HepG2 (cell line): ENCODE measurements at regions of chr17 and their contacts with region 1.

Region 1: DNA sequence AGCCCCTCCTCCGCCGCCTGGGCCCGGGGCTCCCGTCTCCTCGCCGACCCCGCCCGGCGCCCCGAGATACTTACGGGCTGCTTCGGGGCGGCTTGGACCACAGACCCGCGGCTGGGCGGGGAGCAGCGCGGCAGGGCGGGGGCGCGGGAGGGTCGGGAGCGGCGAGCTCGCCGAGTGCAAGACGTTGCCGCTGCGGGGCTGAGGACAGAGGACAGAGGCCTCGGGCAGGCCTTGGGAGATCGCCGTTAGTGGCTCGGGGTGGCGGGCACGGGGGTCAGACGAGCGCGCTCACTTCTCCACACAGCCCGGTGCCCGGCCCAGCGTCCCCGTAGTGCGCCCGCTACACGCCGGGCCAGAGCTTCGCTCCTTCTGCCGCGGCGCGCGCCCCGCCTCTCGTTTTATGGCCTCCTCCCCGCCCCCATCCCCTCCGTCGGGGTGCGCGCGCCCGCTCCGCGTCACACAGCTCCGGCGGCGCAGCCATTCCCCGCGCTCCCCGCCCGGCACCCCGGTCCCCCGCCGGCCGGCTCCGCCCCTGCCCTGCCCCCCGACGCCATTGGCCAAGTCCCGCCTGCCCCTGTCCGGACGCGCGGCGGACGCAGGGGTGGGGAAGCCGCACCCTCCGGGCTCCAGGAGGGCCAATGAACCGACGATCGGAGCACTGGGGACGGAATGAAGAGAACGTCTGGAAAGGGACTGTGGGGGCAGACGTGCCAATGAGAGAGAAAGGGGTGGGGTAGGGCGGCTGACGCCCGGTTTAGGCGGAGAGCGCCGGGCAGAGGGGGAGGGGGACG is at the start of gene TOB1:
- DNase-seq: peak; percentile 97
- ATAC-seq: peak; percentile 91
- H3K4me3 ChIP-seq: peak within 1 kb of the TSS; percentile 97 to 98 (median 97)
- H3K27ac ChIP-seq: peak within 1 kb of the TSS; percentile 95
- H3K4me1 ChIP-seq: peaks cover 41% of the 10 kb centered on the region
- H3K27me3 ChIP-seq: no peaks in the 10 kb centered on the region; a peak in 1 of 5 replicates
- CTCF ChIP-seq: 0 out of 2 replicates have a peak, but pooled peaks have one; percentile 18
- EP300 ChIP-seq: peak; percentile 56 to 63
- POLR2A ChIP-seq: peak; percentile 99 to 100
- RAD21 ChIP-seq: peak; percentile 87
- total RNA-seq, gene TOB1: 19.4 and 21.9 TPM in 2 replicates

Region 2: DNA sequence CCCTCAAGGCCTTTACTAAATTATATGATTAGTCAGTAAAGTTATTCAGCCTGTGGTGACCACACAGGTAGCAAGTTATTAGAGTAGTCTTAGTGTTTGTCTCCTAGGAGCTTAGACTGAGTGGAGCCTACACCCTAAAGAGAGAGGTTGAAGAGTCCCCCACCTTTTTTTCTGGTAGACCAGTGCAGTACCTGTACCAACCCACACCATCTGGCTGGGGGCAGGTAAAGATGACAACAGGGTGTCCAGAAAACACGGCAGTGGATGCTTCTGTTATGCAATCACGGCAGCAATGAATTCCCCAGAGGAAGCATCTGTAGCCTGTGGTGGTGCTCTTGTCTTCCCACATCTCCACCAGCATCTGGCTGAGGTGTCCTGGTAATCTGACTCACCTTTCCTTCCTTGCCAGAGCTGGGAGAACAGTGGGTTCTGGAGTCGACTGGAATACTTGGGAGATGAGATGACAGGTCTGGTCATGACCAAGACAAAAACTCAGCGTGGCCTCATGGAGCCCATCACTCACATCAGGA is 346.9 kb before region 1 on chr17:
- CTCF ChIA-PET with region 1: no interaction called
- POLR2A ChIA-PET with region 1: no interaction called
- in situ Hi-C with region 1: no loop called
- intact Hi-C with region 1: no loop called
- DNase-seq: no peak
- ATAC-seq: 0 out of 3 replicates have a peak, but pooled peaks have one; percentile 2
- H3K4me3 ChIP-seq: no peak overlapping the region; a peak in 1 of 6 replicates
- H3K27ac ChIP-seq: no peak overlapping the region
- H3K4me1 ChIP-seq: peaks cover 55% of the 10 kb centered on the region
- H3K27me3 ChIP-seq: no peaks in the 10 kb centered on the region
- CTCF ChIP-seq: no peak
- EP300 ChIP-seq: no peak
- POLR2A ChIP-seq: no peak
- RAD21 ChIP-seq: no peak

Region 3: DNA sequence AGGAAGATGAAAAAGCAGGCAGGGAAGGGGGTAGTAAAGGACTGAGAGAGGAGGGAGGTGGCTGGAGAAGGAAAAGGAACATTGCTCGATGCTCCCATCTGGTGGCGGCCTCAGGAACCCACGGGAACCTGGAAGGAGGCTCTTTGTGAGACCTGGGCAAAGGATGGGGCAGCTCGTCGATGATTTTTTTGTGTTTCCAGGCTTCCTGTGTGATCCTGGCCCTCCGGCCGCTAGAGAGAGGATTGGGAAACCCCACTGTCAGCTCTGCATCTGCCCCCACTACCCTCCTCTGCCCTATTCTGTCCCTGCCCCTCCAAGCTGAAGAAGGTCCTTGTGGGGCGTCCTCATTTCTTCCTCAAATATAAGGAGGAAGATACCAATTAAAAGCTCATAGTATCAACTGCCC is 24.2 kb before region 1 on chr17:
- CTCF ChIA-PET with region 1: no interaction called
- POLR2A ChIA-PET with region 1: interaction called, 14 read pairs
- in situ Hi-C with region 1: no loop called
- intact Hi-C with region 1: no loop called
- DNase-seq: peak; percentile 66
- ATAC-seq: peak; percentile 61
- H3K4me3 ChIP-seq: no peak overlapping the region
- H3K27ac ChIP-seq: no peak overlapping the region
- H3K4me1 ChIP-seq: peaks cover 77% of the 10 kb centered on the region
- H3K27me3 ChIP-seq: peaks cover 8 to 77% of the 10 kb centered on the region in 2 experiments; a peak in 4 of 5 replicates
- CTCF ChIP-seq: peak; percentile 93
- EP300 ChIP-seq: no peak
- POLR2A ChIP-seq: no peak
- RAD21 ChIP-seq: peak; percentile 84

Region 4: DNA sequence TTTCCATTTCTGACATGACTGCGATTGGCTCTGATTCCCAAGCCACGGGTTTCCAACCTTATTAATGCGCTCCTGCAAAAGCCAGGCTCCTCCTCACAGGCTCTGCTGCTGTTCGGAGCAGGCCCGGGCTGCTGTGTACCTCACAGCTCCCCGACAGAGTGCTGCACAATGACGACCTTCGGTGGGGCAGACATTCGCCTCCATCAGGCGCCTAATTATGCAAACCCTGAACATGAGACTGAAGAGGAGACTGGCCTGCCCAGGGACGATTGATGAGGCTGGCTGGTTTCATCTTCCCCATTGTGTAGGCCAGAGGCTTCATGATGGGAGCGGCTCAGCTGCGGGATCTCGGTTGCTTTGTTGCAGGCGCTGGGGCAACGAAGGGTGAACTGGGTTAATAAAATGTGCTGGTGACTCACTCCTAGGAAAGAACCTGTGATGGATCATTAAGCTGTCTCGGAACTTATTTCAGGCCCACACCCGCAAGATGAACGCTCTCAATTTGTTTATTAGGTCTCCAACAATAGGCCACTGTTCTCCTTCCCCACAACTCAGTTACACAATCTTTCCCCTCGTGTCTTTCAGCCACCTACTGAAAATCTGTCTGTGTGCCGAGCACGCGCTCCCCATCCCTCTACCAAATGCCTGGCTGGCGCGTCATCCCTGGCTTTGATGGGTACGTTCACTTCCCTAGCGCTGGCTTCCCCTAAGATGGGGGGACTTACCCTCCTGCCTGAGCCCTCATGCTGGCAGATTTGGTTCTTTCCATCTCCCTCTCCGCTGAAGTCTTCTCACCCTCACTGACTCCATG is 27.2 kb after region 1 on chr17:
- CTCF ChIA-PET with region 1: no interaction called
- POLR2A ChIA-PET with region 1: interaction called, 343 read pairs
- in situ Hi-C with region 1: no loop called
- intact Hi-C with region 1: loop called (anchors 2 kb)
- DNase-seq: peak; percentile 90
- ATAC-seq: peak; percentile 51
- H3K4me3 ChIP-seq: peak overlapping the region; percentile 52 to 72 (median 62)
- H3K27ac ChIP-seq: peak overlapping the region; percentile 84
- H3K4me1 ChIP-seq: peaks cover 81% of the 10 kb centered on the region
- H3K27me3 ChIP-seq: no peaks in the 10 kb centered on the region
- CTCF ChIP-seq: no peak
- EP300 ChIP-seq: peak in 1 of 2 experiments; percentile 86; a peak in 2 of 4 replicates
- POLR2A ChIP-seq: peak in 1 of 2 experiments; percentile 51; a peak in 2 of 4 replicates
- RAD21 ChIP-seq: no peak

Region 5: DNA sequence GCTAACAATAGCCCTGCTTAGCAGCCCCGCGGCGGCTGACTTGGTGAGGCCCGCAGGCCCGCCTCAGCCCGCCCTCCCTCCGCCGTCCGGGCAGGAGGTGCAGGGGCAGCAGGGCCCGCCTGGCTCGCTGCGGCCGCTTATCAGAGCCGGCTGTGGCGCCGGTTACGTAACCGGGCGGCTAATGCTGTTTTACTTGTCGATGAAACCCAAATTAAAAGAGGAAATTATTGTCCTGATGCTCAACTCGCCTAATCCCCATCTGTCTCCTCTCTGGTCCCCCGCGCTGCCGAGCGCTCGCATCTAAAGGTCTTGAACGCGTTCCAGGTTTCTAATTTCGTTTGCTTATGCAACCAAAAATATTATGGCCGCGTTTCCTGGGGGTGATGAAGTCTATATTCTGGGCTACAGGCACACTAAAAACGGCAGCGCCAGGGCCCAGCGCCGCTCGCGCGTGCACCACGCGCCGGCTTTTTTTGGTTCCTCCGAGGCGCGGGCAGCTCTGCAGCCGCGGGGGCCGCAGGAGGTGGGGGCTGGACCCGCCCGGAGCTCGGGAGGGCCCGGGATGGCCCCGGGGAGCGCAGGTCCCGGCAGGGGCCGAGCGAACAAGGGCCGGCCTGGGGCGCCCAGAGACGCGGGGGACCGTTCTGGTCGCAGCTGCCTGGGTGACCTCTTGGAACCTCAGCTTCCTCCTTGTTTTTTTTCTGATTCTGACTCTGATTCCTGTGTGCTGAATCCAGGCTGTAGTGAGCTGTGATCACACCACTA is 65.1 kb after region 1 on chr17:
- CTCF ChIA-PET with region 1: no interaction called
- POLR2A ChIA-PET with region 1: interaction called, 73 read pairs
- in situ Hi-C with region 1: no loop called
- intact Hi-C with region 1: no loop called
- DNase-seq: peak; percentile 77
- ATAC-seq: peak; percentile 89
- H3K4me3 ChIP-seq: peak overlapping the region; percentile 60 to 85 (median 76)
- H3K27ac ChIP-seq: peak overlapping the region; percentile 77
- H3K4me1 ChIP-seq: peaks cover 74% of the 10 kb centered on the region
- H3K27me3 ChIP-seq: peaks cover 1 to 13% of the 10 kb centered on the region in 2 experiments; a peak in 2 of 5 replicates
- CTCF ChIP-seq: no peak
- EP300 ChIP-seq: no peak
- POLR2A ChIP-seq: 0 out of 4 replicates have a peak, but pooled peaks have one; percentile 35 to 55
- RAD21 ChIP-seq: no peak

Region 6: GRCh38 chr17:50956750-50957523 is 90.8 kb after region 1 on chr17:
- CTCF ChIA-PET with region 1: interaction called, 19 read pairs
- POLR2A ChIA-PET with region 1: interaction called, 52 read pairs
- in situ Hi-C with region 1: no loop called
- intact Hi-C with region 1: no loop called
- DNase-seq: peak; percentile 70
- ATAC-seq: peak; percentile 83
- H3K4me3 ChIP-seq: no peak overlapping the region
- H3K27ac ChIP-seq: no peak overlapping the region
- H3K4me1 ChIP-seq: peaks cover 43% of the 10 kb centered on the region
- H3K27me3 ChIP-seq: no peaks in the 10 kb centered on the region
- CTCF ChIP-seq: peak; percentile 96
- EP300 ChIP-seq: no peak
- POLR2A ChIP-seq: peak in 1 of 2 experiments; percentile 11; a peak in 1 of 4 replicates
- RAD21 ChIP-seq: peak; percentile 93